ENCODE measurements at regions of chr2 and their contacts with region 1.

Region 1: GRCh38 chr2:85340034-85340892 is 12.5 kb upstream of the TGOLN2 start:
- DNase-seq: no peak
- ATAC-seq: peak in 2 of 4 donors; percentile 21 to 40
- H3K4me3 ChIP-seq: no peak overlapping the region
- H3K27ac ChIP-seq: no peak overlapping the region
- H3K4me1 ChIP-seq: peaks cover 0 to 5% (median 0%) of the 10 kb centered on the region in 12 donors
- H3K27me3 ChIP-seq: no peaks in the 10 kb centered on the region
- CTCF ChIP-seq: no peak
- POLR2A ChIP-seq: no peak

Region 2: DNA sequence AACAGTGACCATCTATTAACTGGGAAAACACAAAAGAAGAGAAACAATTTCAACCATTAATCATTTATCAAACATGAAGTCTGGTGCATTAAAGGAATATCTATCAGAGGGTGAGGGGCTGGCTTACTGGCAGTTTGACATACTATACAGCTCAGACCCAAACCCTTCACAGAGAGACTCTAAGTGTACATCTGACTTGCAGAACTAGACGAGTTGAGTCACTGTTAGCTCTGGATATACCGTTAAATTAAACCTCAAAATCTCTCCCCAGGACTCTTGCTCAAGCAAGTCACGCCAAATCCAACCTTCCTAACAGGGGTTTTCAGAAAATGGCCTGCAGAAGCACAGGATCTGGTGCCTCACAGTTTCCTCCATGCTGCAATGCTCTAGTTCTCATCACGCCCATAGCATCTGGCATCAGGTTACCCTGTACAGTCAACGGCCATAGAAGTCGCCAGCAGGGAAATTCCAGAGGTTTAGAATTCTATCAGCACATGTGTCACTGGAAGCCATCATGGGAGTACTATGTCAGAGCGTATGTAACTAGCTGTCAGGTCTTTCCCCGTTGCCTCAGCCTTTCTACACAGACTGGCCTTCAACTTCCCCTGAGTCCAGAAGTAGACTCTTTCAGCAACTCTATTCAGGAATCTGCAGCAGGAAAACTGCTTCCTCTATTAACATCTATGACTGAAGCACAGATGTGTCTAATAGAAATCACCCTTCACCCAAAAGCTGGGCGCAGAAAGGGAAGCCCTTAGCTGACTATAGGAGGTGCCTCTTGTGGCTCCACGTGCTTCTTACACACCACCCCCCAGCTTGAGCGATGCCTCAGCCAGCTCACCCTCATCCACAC is 21.8 kb before region 1 on chr2:
- intact Hi-C with region 1: loop called in 3 of 10 experiments (anchors 1 to 2 kb)
- DNase-seq: no peak
- ATAC-seq: peak in 2 of 4 donors; percentile 31 to 45
- H3K4me3 ChIP-seq: no peak overlapping the region
- H3K27ac ChIP-seq: peak overlapping the region in 1 of 12 donors; percentile 48
- H3K4me1 ChIP-seq: peaks cover 0 to 56% (median 13%) of the 10 kb centered on the region in 12 donors
- H3K27me3 ChIP-seq: no peaks in the 10 kb centered on the region
- CTCF ChIP-seq: no peak
- POLR2A ChIP-seq: no peak

Region 3: DNA sequence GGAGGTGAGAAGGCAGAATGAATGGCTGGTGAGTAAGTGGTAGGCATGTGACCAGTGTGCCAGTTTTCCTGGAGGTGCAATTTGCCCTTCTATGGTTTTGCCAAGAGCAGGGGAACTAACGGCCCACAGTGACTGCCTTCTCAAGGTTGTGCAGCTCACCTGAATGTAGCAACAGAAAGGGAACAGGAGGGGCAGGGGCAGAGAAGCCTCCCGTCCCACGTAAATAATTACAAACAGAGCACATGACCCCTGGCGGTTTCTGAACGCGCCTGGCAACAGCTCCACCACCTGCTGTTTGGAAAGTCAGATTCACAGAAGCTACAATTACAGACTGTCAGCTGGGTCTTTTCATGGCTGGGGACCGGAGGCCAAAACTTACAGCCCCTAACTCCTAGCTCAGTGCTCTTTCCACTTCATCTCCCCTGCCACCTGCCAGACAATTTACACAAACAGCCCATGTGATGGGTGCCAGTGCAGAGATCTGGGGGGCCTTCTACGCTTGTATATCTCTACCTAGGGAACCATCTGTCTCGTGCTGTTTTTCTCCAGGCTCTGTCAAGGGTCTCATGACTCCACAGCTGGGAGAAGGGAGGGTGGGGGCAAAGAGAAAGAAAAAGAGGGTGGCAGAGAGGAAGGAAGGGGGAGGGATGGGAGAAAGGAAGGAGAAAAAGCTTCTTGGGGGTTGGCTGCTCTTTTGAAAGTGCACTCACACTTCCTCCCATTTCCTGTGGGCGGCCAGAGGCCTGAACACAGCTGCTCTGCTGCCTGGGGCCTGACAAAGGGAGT is 695.8 kb after region 1 on chr2:
- intact Hi-C with region 1: no loop called
- DNase-seq: peak; percentile 82 to 92 (median 88)
- ATAC-seq: peak; percentile 78 to 84 (median 83)
- H3K4me3 ChIP-seq: no peak overlapping the region
- H3K27ac ChIP-seq: peak overlapping the region; percentile 72 to 97 (median 85)
- H3K4me1 ChIP-seq: peaks cover 19 to 57% (median 45%) of the 10 kb centered on the region in 12 donors
- H3K27me3 ChIP-seq: no peaks in the 10 kb centered on the region
- CTCF ChIP-seq: peak in 8 of 12 donors; percentile 5 to 22 (median 14)
- POLR2A ChIP-seq: no peak